ENCODE measurements at regions of chr7 and their contacts with region 1.

Region 1: GRCh38 chr7:43834463-43835251 is 34.7 kb downstream of the MRPS24 start:
- DNase-seq: no peak
- H3K4me3 ChIP-seq: no peak overlapping the region
- CTCF ChIP-seq: no peak

Region 2: DNA sequence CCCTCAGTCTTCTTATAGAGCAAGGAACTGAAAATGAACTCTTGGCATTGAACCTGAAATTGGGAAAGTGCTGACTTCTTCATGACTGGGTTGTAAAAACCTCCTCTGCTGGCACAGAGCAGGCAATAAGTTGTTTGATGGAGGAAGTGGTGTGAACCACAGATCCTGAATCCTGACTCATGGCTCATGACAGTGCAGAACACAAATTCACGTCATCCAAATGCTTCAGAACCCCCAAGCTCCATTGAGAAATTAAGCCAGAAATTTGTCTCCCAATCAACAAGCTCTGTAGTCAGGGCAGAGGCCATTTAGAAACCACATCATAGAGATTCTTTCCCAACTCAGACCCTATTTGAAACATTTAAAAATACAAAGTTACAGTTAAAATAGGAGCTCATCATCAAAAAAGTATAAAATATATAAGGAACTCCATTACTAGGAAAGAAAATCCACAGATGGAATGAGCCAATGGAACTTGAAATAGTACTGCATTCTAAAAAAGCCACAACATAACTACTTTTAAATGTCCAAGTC is 262.1 kb before region 1 on chr7:
- CTCF ChIA-PET with region 1: interaction called, 10 read pairs
- POLR2A ChIA-PET with region 1: no interaction called
- DNase-seq: peak; percentile 100
- H3K4me3 ChIP-seq: no peak overlapping the region
- CTCF ChIP-seq: no peak

Region 3: DNA sequence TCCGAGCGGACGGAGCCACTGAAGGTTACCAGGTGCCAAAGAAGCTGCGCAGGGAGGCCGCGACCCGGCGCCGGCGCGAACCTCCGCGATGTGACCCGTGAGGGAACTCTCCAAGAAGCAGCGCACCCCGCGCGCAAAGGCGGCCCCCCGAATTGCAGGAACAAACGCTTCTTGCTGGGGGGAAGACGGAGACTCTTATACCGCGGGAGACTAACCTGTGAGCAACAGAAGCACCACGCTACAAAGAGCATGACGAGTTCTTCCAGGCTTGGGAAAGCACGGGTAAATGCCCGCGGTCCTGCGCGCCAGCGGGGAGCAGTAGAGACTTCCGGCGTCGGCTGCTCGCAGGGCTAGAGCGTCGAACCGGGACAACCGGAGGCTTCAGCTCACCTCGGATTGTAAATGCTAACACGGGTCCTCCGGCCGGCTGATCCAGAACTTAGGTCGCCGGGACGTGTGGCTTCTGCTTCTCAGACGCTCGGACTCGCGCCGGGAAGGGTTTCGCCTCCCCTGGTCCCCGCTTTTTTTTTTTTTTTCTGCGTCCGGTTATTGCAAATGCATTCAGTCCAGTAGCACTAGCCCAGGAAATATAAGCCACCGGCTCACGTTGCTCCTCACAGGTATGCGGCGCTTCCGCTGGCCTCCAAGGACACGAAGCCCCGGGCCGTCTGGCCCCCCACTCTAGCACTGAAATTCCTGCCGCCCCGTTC is 105.3 kb before region 1 on chr7 and contains the start of gene COA1:
- CTCF ChIA-PET with region 1: interaction called, 37 read pairs
- POLR2A ChIA-PET with region 1: no interaction called
- DNase-seq: peak; percentile 56
- H3K4me3 ChIP-seq: peak within 1 kb of the TSS; percentile 81
- CTCF ChIP-seq: no peak

Region 4: GRCh38 chr7:43758029-43758821 is 76.4 kb before region 1 on chr7 and contains the start of gene BLVRA:
- CTCF ChIA-PET with region 1: interaction called, 14 read pairs
- POLR2A ChIA-PET with region 1: no interaction called
- DNase-seq: no peak
- H3K4me3 ChIP-seq: peak within 1 kb of the TSS; percentile 71
- CTCF ChIP-seq: no peak

Region 5: GRCh38 chr7:43850348-43851116 is 15.9 kb after region 1 on chr7:
- CTCF ChIA-PET with region 1: interaction called, 60 read pairs
- POLR2A ChIA-PET with region 1: no interaction called
- DNase-seq: no peak
- H3K4me3 ChIP-seq: no peak overlapping the region
- CTCF ChIP-seq: no peak

Measured in AG04449 (cell line).